ENCODE measurements at regions of chr15 and their contacts with region 1.

Region 1: DNA sequence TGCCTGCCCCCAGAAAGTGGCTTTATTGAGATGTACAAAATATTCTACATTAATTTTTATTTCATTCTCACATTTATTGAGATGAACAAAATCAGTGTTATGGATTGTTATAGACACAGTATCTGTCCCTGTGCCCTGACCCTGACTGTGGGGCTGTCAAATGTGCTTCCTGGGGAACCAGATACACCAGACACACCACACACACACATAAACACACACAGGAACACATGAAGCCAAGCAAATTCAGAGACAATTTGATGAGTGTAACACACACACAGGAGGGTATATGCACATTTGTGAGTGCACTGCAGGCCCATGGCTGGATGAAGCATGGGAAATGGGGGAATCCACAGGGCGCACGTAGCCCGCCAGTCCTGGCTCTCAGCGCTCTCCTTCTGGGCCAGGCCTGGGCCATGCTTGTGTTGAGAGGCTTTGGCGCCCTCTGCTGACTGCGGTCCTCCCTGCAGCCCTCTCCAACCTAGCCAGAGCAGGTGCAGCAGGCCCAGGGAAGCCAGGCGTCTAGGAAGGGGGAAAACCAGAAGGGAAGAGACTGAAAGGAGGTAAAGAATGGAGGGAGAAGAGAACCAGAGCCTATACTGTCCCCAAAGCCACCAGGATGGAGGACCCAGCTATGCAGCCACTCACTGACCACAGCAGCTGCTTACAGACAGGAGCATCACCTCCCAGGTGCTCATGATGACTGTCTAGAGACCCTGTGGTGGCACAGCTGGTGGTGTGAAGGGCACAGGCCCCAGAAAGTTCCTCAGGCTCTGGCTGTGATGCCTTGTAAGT is 18.0 kb upstream of the LOXL1 start:
- DNase-seq: peak; percentile 86
- H3K4me3 Mint-ChIP-seq: no peak overlapping the region
- H3K27ac Mint-ChIP-seq: no peak overlapping the region
- H3K4me1 Mint-ChIP-seq: no peaks in the 10 kb centered on the region
- H3K27me3 Mint-ChIP-seq: no peaks in the 10 kb centered on the region

Region 2: GRCh38 chr15:73891328-73892315 is 16.6 kb before region 1 on chr15:
- CTCF ChIA-PET with region 1: interaction called, 43 read pairs
- POLR2A ChIA-PET with region 1: no interaction called
- intact Hi-C with region 1: no loop called
- DNase-seq: no peak
- H3K4me3 Mint-ChIP-seq: no peak overlapping the region
- H3K27ac Mint-ChIP-seq: no peak overlapping the region
- H3K4me1 Mint-ChIP-seq: no peaks in the 10 kb centered on the region
- H3K27me3 Mint-ChIP-seq: peaks cover 2% of the 10 kb centered on the region

Region 3: GRCh38 chr15:73897441-73898261 is 10.6 kb before region 1 on chr15:
- CTCF ChIA-PET with region 1: interaction called, 43 read pairs
- POLR2A ChIA-PET with region 1: no interaction called
- intact Hi-C with region 1: no loop called
- DNase-seq: peak; percentile 82
- H3K4me3 Mint-ChIP-seq: no peak overlapping the region
- H3K27ac Mint-ChIP-seq: no peak overlapping the region
- H3K4me1 Mint-ChIP-seq: no peaks in the 10 kb centered on the region
- H3K27me3 Mint-ChIP-seq: no peaks in the 10 kb centered on the region

Region 4: GRCh38 chr15:73922186-73923151 is 14.2 kb after region 1 on chr15:
- CTCF ChIA-PET with region 1: interaction called, 26 read pairs
- POLR2A ChIA-PET with region 1: interaction called, 3 read pairs
- intact Hi-C with region 1: no loop called
- DNase-seq: no peak
- H3K4me3 Mint-ChIP-seq: no peak overlapping the region
- H3K27ac Mint-ChIP-seq: peak overlapping the region; percentile 81
- H3K4me1 Mint-ChIP-seq: peaks cover 53% of the 10 kb centered on the region
- H3K27me3 Mint-ChIP-seq: no peaks in the 10 kb centered on the region

Measured in activated CD4-positive, alpha-beta memory T cell treated with anti-CD3 and anti-CD28 coated beads for 36 hours (primary cell).